ENCODE measurements at regions of chr13 and their contacts with region 1.

Region 1: GRCh38 chr13:30114571-30115256 is 192.6 kb downstream of the KATNAL1 start:
- DNase-seq: peak; percentile 86

Region 2: GRCh38 chr13:29763436-29764180 is 351.1 kb before region 1 on chr13:
- in situ Hi-C with region 1: loop called (anchors 10 kb)
- DNase-seq: no peak

Measured in KBM-7 (cell line).